ENCODE measurements at regions of chr4 and their contacts with region 1.

Region 1: DNA sequence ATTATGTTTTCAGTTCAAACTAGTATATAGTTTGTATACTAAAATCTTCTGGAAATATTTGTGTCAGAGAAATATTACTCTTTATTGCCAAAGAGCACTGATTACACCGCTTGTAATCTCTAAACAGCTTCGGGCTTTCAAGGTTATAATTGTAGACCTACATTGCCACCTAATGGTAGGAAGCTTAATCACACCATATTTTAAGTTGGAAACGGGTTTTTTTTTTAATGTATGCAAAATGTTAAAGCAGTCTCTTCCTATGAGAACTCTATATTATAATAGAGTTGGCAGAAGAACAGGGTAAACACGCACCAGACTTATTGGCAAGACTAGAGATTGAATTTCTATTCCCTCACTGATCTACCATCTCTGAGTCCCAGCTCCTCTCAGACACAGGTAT is 19.5 kb upstream of the NFXL1 start:
- DNase-seq: no peak
- H3K4me3 ChIP-seq: no peak overlapping the region
- H3K27ac ChIP-seq: no peak overlapping the region
- H3K4me1 ChIP-seq: no peaks in the 10 kb centered on the region
- H3K27me3 ChIP-seq: no peaks in the 10 kb centered on the region
- CTCF ChIP-seq: peak in 2 of 3 experiments; percentile 57 to 63

Region 2: DNA sequence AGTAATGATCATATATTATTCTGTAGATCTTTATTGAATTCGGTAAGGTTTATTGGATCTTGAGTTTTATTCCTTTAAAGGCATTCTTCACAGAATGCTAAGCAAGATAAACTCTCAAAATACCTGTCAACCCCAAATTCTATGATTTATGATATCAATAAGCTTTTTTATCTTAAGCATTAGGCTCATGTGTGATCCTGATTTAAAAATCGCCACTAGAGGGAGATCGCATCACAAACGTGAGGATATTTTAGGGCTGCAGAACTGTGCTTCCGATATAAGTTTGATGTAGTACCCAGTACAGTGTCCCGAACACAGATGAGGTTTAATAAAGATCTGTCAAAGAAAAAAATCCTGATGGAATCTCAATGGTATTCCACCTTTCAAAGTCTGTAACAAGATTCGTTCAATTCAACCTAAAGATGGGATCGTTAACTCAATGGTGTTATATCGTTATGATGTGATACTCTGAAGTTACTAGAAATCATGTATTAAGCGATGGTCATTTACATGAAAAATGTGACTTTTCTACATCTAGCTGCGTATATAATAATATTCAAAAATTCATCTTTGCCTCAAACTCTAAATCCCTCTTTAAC is 264.9 kb before region 1 on chr4:
- intact Hi-C with region 1: loop called (anchors 5 kb)
- DNase-seq: no peak
- H3K4me3 ChIP-seq: no peak overlapping the region
- H3K27ac ChIP-seq: no peak overlapping the region
- H3K4me1 ChIP-seq: no peaks in the 10 kb centered on the region
- H3K27me3 ChIP-seq: no peaks in the 10 kb centered on the region
- CTCF ChIP-seq: peak in 2 of 3 experiments; percentile 51 to 66

Region 3: GRCh38 chr4:47954245-47954644 is 20.4 kb after region 1 on chr4:
- intact Hi-C with region 1: no loop called
- DNase-seq: no peak
- H3K4me3 ChIP-seq: no peak overlapping the region
- H3K27ac ChIP-seq: no peak overlapping the region
- H3K4me1 ChIP-seq: no peaks in the 10 kb centered on the region
- H3K27me3 ChIP-seq: no peaks in the 10 kb centered on the region
- CTCF ChIP-seq: no peak